Activated CD8-positive, alpha-beta T cell treated with anti-CD3 and anti-CD28 coated beads, Interleukin-2, amount 10 ng/mL, durations not matched to agents 7 days and 5 days (primary cell): ENCODE measurements at regions of chr11 and their contacts with region 1.

Region 1: DNA sequence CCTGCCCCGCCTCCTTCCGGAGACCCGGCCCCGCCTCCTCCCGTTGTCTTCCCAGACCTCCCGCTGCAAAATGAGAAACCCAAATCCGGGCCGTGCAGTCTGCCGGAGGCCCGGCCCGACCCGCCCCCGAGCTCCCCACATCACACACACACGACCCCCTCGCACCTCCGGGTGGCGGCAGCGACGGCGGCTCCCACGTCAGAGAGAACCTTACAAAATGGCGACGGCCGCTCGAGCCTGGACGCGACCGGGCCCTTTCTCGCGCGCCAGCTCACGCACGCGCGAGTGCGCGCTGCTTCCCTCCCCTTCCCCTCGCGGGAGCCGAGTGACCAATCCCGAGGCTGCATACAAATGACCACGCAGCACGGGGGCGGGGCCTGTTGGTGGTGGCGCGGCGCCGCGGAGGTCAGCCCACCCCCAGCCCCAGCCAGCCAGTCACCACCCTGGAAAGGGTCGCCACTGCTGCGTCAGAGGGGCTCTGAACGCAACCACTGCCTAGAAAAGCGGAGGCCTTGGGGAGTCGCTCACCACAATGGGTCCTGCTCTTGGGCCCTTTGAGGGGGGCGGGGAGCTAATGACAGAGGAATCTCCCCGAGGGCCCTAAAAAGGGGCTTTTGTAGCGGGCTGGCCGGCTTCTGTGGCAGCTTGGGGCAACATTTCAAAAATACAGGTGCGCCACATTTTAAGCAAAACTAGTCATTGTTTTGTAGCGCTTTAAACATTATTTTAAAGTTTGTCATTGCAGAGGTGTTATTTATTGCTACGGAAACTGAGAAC is at the start of gene RBM4B:
- DNase-seq: peak; percentile 96
- ATAC-seq: peak; percentile 89
- H3K4me3 Mint-ChIP-seq: peak within 1 kb of the TSS; percentile 95
- H3K27ac Mint-ChIP-seq: peak within 1 kb of the TSS; percentile 99
- H3K4me1 Mint-ChIP-seq: peaks cover 35% of the 10 kb centered on the region
- H3K27me3 Mint-ChIP-seq: no peaks in the 10 kb centered on the region
- total RNA-seq, gene RBM4B: 18.7 to 21.5 TPM

Region 2: DNA sequence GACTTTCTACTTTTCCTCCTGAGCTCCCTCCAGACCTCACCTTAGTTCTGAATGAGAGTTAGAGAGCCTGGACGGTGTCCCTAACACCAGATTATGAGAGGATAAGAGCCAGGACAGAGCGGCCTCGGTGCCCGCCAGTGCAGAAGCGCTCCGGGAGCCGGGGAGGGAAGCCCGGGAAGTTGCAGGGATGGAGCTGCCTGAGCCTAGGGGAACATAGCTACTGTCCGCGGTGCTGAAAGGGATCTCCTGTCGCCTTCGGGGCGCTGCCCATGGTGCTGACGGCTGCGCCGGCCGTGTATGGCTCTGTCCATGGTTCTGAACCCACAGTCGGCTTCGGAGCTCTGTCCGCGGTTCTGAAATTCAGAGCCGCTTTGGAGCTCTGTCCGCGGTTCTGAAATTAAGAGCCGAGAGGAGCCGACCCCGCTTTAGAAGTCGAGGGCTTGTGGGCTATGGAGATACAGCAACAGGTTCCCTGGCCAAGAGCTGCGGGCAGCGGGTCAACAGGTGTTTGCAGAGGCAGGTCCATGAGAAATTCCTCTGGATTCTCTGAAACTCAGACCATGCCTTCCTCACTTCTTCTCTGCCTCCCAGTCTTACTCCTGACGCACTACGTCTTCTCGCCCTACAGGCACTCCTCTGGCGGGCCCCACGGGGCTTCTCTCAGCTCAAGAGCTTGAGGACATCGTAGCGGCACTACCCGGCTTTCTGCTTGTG is 256.1 kb before region 1 on chr11:
- CTCF ChIA-PET with region 1: interaction called, 16 read pairs
- POLR2A ChIA-PET with region 1: no interaction called
- DNase-seq: peak; percentile 92
- ATAC-seq: peak; percentile 72
- H3K4me3 Mint-ChIP-seq: no peak overlapping the region
- H3K27ac Mint-ChIP-seq: no peak overlapping the region
- H3K4me1 Mint-ChIP-seq: peaks cover 13% of the 10 kb centered on the region
- H3K27me3 Mint-ChIP-seq: peaks cover 19% of the 10 kb centered on the region

Region 3: GRCh38 chr11:66545701-66546367 is 132.0 kb before region 1 on chr11 and contains the start of gene ZDHHC24:
- CTCF ChIA-PET with region 1: interaction called, 30 read pairs
- POLR2A ChIA-PET with region 1: interaction called, 18 read pairs
- DNase-seq: peak; percentile 91
- ATAC-seq: peak; percentile 88
- H3K4me3 Mint-ChIP-seq: peak within 1 kb of the TSS; percentile 83
- H3K27ac Mint-ChIP-seq: peak within 1 kb of the TSS; percentile 78
- H3K4me1 Mint-ChIP-seq: peaks cover 38% of the 10 kb centered on the region
- H3K27me3 Mint-ChIP-seq: peaks cover 19% of the 10 kb centered on the region
- total RNA-seq, gene ZDHHC24: 15.5 to 15.9 TPM

Region 4: GRCh38 chr11:66592457-66593302 is 85.1 kb before region 1 on chr11 and contains the starts of genes CCDC87 and CCS:
- CTCF ChIA-PET with region 1: interaction called, 63 read pairs
- POLR2A ChIA-PET with region 1: interaction called, 4 read pairs
- DNase-seq: peak; percentile 99
- ATAC-seq: peak; percentile 97
- H3K4me3 Mint-ChIP-seq: peak within 1 kb of the TSS; percentile 100
- H3K27ac Mint-ChIP-seq: peak within 1 kb of the TSS; percentile 98
- H3K4me1 Mint-ChIP-seq: peaks cover 37% of the 10 kb centered on the region
- H3K27me3 Mint-ChIP-seq: no peaks in the 10 kb centered on the region
- total RNA-seq, gene CCDC87: 0.55 to 0.70 TPM
- total RNA-seq, gene CCS: 29.3 to 32.5 TPM

Region 5: GRCh38 chr11:66638177-66639065 is 39.4 kb before region 1 on chr11 and contains the start of gene RBM4:
- CTCF ChIA-PET with region 1: interaction called, 32 read pairs
- POLR2A ChIA-PET with region 1: interaction called, 40 read pairs
- DNase-seq: peak; percentile 99
- ATAC-seq: peak; percentile 95
- H3K4me3 Mint-ChIP-seq: peak within 1 kb of the TSS; percentile 98
- H3K27ac Mint-ChIP-seq: peak within 1 kb of the TSS; percentile 98
- H3K4me1 Mint-ChIP-seq: peaks cover 62% of the 10 kb centered on the region
- H3K27me3 Mint-ChIP-seq: no peaks in the 10 kb centered on the region
- total RNA-seq, gene RBM4: 118 to 121 TPM

Region 6: GRCh38 chr11:66810576-66811185 is 132.9 kb after region 1 on chr11:
- CTCF ChIA-PET with region 1: no interaction called
- POLR2A ChIA-PET with region 1: no interaction called
- DNase-seq: no peak
- ATAC-seq: no peak
- H3K4me3 Mint-ChIP-seq: no peak overlapping the region
- H3K27ac Mint-ChIP-seq: no peak overlapping the region
- H3K4me1 Mint-ChIP-seq: no peaks in the 10 kb centered on the region
- H3K27me3 Mint-ChIP-seq: no peaks in the 10 kb centered on the region

Region 7: DNA sequence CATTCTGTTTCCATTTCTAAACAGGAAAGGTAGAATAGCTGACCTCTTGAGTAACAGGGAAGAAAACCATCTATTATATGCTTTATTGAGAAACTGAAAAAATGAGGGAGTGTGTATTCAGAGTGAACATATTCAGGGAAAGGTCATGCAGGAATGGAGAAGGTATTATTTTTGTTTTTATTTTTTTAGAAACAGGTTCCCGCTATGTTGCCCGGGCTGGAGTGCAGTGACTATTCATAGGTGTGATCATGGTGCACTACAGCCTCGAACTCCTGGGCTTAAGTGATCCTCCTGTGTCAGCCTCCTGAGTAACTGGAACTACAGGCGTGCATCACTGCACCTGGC is 156.7 kb after region 1 on chr11:
- CTCF ChIA-PET with region 1: interaction called, 10 read pairs
- POLR2A ChIA-PET with region 1: interaction called, 3 read pairs
- DNase-seq: no peak
- ATAC-seq: no peak
- H3K4me3 Mint-ChIP-seq: no peak overlapping the region
- H3K27ac Mint-ChIP-seq: no peak overlapping the region
- H3K4me1 Mint-ChIP-seq: peaks cover 7% of the 10 kb centered on the region
- H3K27me3 Mint-ChIP-seq: no peaks in the 10 kb centered on the region